ENCODE measurements at regions of chr12 and their contacts with region 1.

Region 1: DNA sequence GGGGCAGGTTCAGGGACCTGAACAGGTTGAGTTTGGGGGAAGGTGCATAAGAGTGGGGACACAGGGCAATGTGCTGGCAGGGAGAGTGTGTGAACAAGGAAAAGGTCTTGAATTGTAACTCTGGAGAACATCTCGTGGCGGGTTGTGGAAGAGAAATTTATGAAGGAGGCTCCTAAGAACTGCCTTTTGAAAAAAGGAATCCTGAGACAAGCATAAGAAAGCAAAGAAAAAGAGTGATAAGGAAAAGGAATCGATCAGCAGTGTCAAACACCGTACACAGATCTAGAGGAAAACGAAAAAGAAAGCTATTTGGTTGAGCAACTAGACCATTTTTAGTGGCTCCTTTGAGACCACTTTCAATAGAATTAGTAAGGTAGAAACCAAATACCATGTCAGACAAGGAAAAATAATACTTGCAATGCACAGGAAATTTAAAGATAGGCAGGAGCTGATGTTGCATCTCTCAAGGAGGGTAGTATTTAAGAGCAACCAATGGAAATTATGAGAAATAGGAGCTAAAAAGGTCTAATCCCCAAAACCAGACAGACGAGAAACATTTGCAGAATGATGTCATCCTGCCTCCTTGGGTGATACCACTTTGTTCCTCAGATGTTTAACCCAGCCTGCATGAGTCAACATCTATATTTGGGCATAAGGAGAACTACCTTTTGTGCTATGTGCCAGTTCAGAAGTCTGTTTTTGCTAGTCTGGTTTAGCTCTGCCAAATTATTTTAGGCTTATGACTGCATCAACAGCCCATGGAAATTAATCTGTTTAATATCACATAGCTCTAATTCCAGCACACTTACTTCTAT is 64.5 kb upstream of the STK38L start:
- DNase-seq: peak; percentile 89 to 97 (median 94)
- H3K4me3 ChIP-seq: peak overlapping the region in 1 of 3 experiments; percentile 33
- H3K4me3 Mint-ChIP-seq: peak overlapping the region in 1 of 2 donors; percentile 62
- H3K27ac ChIP-seq: peak overlapping the region in 1 of 2 donors; percentile 84
- H3K27ac Mint-ChIP-seq: peak overlapping the region; percentile 92 to 98 (median 96)
- H3K4me1 ChIP-seq: peaks cover 41 to 50% of the 10 kb centered on the region in 2 donors
- H3K4me1 Mint-ChIP-seq: peaks cover 43% of the 10 kb centered on the region
- H3K27me3 ChIP-seq: no peaks in the 10 kb centered on the region
- H3K27me3 Mint-ChIP-seq: peaks cover 0 to 7% (median 3%) of the 10 kb centered on the region in 3 donors
- CTCF ChIP-seq: no peak

Region 2: DNA sequence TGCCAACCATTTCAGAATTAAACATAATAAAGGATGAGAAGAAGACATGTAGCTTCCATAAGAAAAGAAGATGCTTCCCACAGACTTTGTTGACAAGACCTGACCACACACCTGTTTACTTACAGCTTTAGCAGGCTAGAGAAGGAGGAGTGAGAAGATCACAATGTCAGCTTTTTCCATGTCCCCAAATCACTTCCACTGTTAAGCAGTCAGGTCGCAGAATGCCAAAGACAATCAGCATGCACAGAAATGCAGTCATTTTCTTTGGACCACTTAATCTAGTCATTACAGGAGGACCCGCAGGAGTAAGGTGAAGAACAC is 669.3 kb before region 1 on chr12:
- intact Hi-C with region 1: no loop called
- DNase-seq: no peak
- H3K4me3 ChIP-seq: no peak overlapping the region
- H3K4me3 Mint-ChIP-seq: no peak overlapping the region
- H3K27ac ChIP-seq: no peak overlapping the region
- H3K27ac Mint-ChIP-seq: no peak overlapping the region
- H3K4me1 ChIP-seq: no peaks in the 10 kb centered on the region
- H3K4me1 Mint-ChIP-seq: no peaks in the 10 kb centered on the region
- H3K27me3 ChIP-seq: no peaks in the 10 kb centered on the region
- H3K27me3 Mint-ChIP-seq: no peaks in the 10 kb centered on the region
- CTCF ChIP-seq: no peak

Region 3: GRCh38 chr12:26906704-26907103 is 272.9 kb before region 1 on chr12:
- intact Hi-C with region 1: no loop called
- DNase-seq: no peak
- H3K4me3 ChIP-seq: no peak overlapping the region
- H3K4me3 Mint-ChIP-seq: no peak overlapping the region
- H3K27ac ChIP-seq: no peak overlapping the region
- H3K27ac Mint-ChIP-seq: no peak overlapping the region
- H3K4me1 ChIP-seq: no peaks in the 10 kb centered on the region
- H3K4me1 Mint-ChIP-seq: no peaks in the 10 kb centered on the region
- H3K27me3 ChIP-seq: no peaks in the 10 kb centered on the region
- H3K27me3 Mint-ChIP-seq: peaks cover 0 to 2% (median 0%) of the 10 kb centered on the region in 3 donors
- CTCF ChIP-seq: no peak

Region 4: DNA sequence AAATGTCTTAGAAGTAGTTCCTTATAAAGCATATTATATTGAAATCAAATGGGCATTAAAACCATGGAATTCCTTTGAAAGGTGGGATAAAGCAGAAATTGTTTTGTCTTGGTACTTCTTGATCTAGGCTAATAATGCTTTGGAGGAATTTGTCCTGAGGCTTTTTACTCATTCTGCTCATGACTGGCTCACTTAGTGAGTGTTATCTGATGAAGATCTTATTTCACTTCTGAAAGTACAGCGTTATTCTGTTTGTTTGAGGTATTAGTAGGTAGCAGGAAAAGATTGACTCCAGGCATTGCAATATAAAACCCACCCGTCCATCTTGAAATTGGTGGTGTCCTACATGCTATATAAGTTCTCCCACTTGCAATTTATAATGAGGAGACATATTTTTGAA is 102.7 kb before region 1 on chr12:
- intact Hi-C with region 1: no loop called
- DNase-seq: no peak
- H3K4me3 ChIP-seq: no peak overlapping the region
- H3K4me3 Mint-ChIP-seq: no peak overlapping the region
- H3K27ac ChIP-seq: no peak overlapping the region
- H3K27ac Mint-ChIP-seq: no peak overlapping the region
- H3K4me1 ChIP-seq: peaks cover 9 to 11% of the 10 kb centered on the region in 2 donors
- H3K4me1 Mint-ChIP-seq: peaks cover 24% of the 10 kb centered on the region
- H3K27me3 ChIP-seq: no peaks in the 10 kb centered on the region
- H3K27me3 Mint-ChIP-seq: peaks cover 0 to 1% (median 0%) of the 10 kb centered on the region in 3 donors
- CTCF ChIP-seq: no peak

Region 5: GRCh38 chr12:27220057-27220987 is 40.7 kb after region 1 on chr12:
- intact Hi-C with region 1: loop called in 1 of 2 experiments (anchors 5 kb)
- DNase-seq: no peak
- H3K4me3 ChIP-seq: no peak overlapping the region
- H3K4me3 Mint-ChIP-seq: no peak overlapping the region
- H3K27ac ChIP-seq: peak overlapping the region in 1 of 2 donors; percentile 68
- H3K27ac Mint-ChIP-seq: peak overlapping the region; percentile 41 to 88 (median 79)
- H3K4me1 ChIP-seq: peaks cover 36 to 43% of the 10 kb centered on the region in 2 donors
- H3K4me1 Mint-ChIP-seq: peaks cover 45% of the 10 kb centered on the region
- H3K27me3 ChIP-seq: no peaks in the 10 kb centered on the region
- H3K27me3 Mint-ChIP-seq: no peaks in the 10 kb centered on the region
- CTCF ChIP-seq: no peak

Region 6: GRCh38 chr12:27243804-27244683 is 64.4 kb after region 1 on chr12 and contains the start of gene STK38L:
- intact Hi-C with region 1: loop called (anchors 2 to 5 kb)
- DNase-seq: peak; percentile 97 to 99 (median 98)
- H3K4me3 ChIP-seq: peak within 1 kb of the TSS; percentile 85 to 88 (median 87)
- H3K4me3 Mint-ChIP-seq: peak within 1 kb of the TSS; percentile 99
- H3K27ac ChIP-seq: peak within 1 kb of the TSS; percentile 90 to 97
- H3K27ac Mint-ChIP-seq: peak within 1 kb of the TSS; percentile 97 to 100 (median 98)
- H3K4me1 ChIP-seq: peaks cover 28 to 42% of the 10 kb centered on the region in 2 donors
- H3K4me1 Mint-ChIP-seq: peaks cover 47% of the 10 kb centered on the region
- H3K27me3 ChIP-seq: no peaks in the 10 kb centered on the region
- H3K27me3 Mint-ChIP-seq: peaks cover 0 to 1% (median 0%) of the 10 kb centered on the region in 3 donors
- CTCF ChIP-seq: peak; percentile 34
- polyA plus RNA-seq, gene STK38L: 20.0 to 29.5 (median 20.5) TPM

Region 7: DNA sequence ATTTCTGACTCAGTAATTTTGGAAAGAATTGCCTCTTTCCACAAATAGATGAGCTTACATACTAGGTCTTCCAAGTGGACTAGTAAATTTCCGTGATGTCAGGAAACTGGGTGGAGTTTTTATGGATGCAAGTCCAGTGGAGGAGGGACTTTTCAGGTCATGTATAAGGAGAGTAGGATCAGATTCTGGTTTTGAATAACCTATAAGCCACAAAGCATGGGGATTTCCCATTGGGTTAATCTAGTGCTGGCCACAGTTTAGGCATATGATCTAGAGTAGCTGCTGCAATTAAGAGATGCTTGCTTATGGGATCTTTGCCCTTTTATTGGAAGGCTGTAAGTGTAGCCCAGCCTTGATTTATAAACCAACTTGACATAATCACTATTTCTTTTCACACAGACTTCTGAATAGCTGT is 98.2 kb after region 1 on chr12:
- intact Hi-C with region 1: no loop called
- DNase-seq: no peak
- H3K4me3 ChIP-seq: no peak overlapping the region
- H3K4me3 Mint-ChIP-seq: no peak overlapping the region
- H3K27ac ChIP-seq: no peak overlapping the region
- H3K27ac Mint-ChIP-seq: no peak overlapping the region
- H3K4me1 ChIP-seq: peaks cover 10 to 14% of the 10 kb centered on the region in 2 donors
- H3K4me1 Mint-ChIP-seq: peaks cover 17% of the 10 kb centered on the region
- H3K27me3 ChIP-seq: no peaks in the 10 kb centered on the region
- H3K27me3 Mint-ChIP-seq: peaks cover 0 to 3% (median 0%) of the 10 kb centered on the region in 3 donors
- CTCF ChIP-seq: no peak